ENCODE measurements at regions of chr15 and their contacts with region 1.

Region 1: GRCh38 chr15:41465822-41466421 is 27.8 kb upstream of the ITPKA start:
- DNase-seq: peak; percentile 59
- H3K4me3 Mint-ChIP-seq: no peak overlapping the region
- H3K27ac Mint-ChIP-seq: no peak overlapping the region
- H3K4me1 Mint-ChIP-seq: peaks cover 5% of the 10 kb centered on the region
- H3K27me3 Mint-ChIP-seq: no peaks in the 10 kb centered on the region
- CTCF ChIP-seq: peak; percentile 93

Region 2: GRCh38 chr15:41476416-41477048 is 10.6 kb after region 1 on chr15:
- CTCF ChIA-PET with region 1: interaction called, 21 read pairs
- POLR2A ChIA-PET with region 1: interaction called, 6 read pairs
- intact Hi-C with region 1: no loop called
- DNase-seq: peak; percentile 89
- H3K4me3 Mint-ChIP-seq: peak overlapping the region; percentile 17
- H3K27ac Mint-ChIP-seq: peak overlapping the region; percentile 92
- H3K4me1 Mint-ChIP-seq: peaks cover 18% of the 10 kb centered on the region
- H3K27me3 Mint-ChIP-seq: no peaks in the 10 kb centered on the region
- CTCF ChIP-seq: no peak

Region 3: GRCh38 chr15:41494190-41494921 is 28.4 kb after region 1 on chr15:
- CTCF ChIA-PET with region 1: no interaction called
- POLR2A ChIA-PET with region 1: no interaction called
- intact Hi-C with region 1: no loop called
- DNase-seq: no peak
- H3K4me3 Mint-ChIP-seq: peak overlapping the region; percentile 72
- H3K27ac Mint-ChIP-seq: no peak overlapping the region
- H3K4me1 Mint-ChIP-seq: peaks cover 14% of the 10 kb centered on the region
- H3K27me3 Mint-ChIP-seq: no peaks in the 10 kb centered on the region
- CTCF ChIP-seq: no peak

Region 4: DNA sequence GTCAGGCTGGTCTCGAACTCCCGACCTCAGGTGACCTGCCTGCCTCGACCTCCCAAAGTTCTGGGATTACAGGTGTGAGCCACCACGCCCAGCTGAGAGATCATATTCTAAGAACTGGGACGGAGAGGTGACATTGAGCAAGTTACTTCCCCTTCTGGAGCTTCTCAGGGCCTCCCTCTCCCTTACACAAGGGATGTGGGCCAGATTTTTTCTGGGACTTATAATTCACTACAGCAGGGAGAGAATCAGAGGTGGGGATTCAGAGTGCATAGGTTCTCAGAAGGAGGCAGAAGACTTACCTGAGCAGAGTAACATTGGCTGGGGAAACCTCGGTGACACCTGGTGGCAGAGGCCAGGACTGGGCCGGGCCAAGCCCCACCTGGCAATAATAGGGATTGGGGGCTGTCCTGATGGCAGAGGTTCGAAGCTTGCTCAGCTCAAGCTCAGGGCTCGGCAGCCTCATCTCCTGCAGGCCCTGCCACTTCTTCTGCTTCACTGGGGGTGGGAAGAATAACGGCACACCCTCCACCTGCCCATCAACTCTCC is 40.9 kb after region 1 on chr15:
- CTCF ChIA-PET with region 1: interaction called, 17 read pairs
- POLR2A ChIA-PET with region 1: interaction called, 10 read pairs
- intact Hi-C with region 1: no loop called
- DNase-seq: peak; percentile 31
- H3K4me3 Mint-ChIP-seq: no peak overlapping the region
- H3K27ac Mint-ChIP-seq: no peak overlapping the region
- H3K4me1 Mint-ChIP-seq: peaks cover 7% of the 10 kb centered on the region
- H3K27me3 Mint-ChIP-seq: no peaks in the 10 kb centered on the region
- CTCF ChIP-seq: peak; percentile 12

Region 5: DNA sequence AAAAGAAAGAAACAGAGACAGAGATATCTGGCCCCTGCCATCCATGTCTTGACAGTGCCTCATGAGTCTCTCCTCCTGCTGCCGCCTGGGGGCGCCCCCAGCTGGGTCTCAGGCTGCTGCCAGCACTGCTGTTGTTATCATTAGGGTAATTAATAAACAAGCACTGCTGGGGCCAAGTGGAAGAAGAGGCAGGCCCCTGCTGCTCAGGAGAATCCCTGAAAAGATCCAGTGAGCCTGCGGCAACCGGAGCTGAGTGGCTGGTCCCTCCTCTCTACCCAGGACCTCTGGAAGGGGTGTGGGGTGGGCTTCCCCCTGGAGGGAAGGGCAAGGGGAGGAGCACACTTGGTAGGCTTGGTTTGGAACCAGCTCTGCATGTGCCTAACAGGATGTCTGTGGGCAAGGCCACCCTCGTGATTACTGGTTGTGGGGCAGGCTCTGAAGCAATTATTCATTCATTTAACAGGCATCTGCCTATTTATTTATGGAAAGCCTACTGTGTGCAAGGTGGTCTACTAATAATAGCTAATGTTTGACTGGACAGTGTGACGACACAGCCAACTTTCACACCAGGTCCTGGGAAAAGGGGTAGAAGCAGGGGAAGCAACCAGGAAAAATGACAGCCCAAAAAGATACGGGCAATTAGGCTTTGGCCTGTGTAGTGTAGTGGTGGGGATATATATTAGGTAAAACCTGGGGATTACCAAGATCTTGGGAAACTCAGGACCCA is 91.9 kb after region 1 on chr15:
- CTCF ChIA-PET with region 1: no interaction called
- POLR2A ChIA-PET with region 1: no interaction called
- intact Hi-C with region 1: loop called (anchors 5 kb)
- DNase-seq: peak; percentile 55
- H3K4me3 Mint-ChIP-seq: peak overlapping the region; percentile 75
- H3K27ac Mint-ChIP-seq: no peak overlapping the region
- H3K4me1 Mint-ChIP-seq: no peaks in the 10 kb centered on the region
- H3K27me3 Mint-ChIP-seq: no peaks in the 10 kb centered on the region
- CTCF ChIP-seq: peak; percentile 69

Region 6: DNA sequence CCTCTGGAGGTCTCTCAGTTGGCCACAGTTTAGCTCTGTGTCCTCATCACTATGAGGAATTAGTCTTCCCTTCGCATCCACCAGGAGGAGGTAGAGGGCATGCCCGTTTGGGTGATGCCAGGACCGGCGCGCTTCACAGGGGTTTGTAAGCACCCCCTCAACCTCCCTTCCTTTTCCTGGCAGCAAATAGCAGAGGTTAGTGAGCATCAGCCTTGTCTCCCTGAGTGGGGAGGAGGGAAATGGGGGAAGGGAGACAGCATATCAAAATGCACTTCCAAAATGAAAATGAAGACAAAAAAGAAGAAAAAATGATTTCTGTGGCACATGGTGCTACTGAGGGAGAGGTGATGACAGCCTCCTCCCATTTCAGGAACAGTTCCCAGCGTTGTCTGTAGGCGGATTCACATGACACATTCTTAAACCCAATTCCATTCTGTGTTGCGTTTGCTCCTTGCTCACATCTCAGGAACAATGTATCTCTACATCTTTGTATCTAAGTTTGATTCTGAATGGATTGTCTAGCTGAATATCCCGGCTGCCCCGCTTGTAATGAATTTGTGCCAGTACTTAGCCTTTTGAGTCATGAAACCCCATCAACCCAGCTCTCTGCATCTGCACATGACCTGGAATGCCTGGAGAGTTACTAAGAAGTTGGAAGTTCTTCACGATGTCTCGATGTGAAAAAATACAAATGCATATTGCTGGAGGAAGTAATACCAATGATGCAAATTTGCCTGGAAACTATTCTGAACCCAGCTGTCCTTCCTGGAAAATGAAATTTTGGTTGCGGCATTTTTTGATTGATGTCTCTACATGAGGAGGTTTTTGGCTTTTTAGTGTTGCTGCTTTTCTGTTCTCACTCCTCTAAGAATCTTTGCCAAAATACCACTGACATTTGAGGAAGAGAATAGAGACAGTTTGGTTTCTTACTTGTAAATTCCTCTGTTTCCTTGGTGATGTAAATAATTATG is 138.3 kb after region 1 on chr15:
- CTCF ChIA-PET with region 1: interaction called, 4 read pairs
- POLR2A ChIA-PET with region 1: no interaction called
- intact Hi-C with region 1: loop called (anchors 5 kb)
- DNase-seq: peak; percentile 81
- H3K4me3 Mint-ChIP-seq: peak overlapping the region; percentile 69
- H3K27ac Mint-ChIP-seq: peak overlapping the region; percentile 13
- H3K4me1 Mint-ChIP-seq: peaks cover 16% of the 10 kb centered on the region
- H3K27me3 Mint-ChIP-seq: no peaks in the 10 kb centered on the region
- CTCF ChIP-seq: peak; percentile 55

Region 7: GRCh38 chr15:41671656-41672648 is 206.0 kb after region 1 on chr15:
- CTCF ChIA-PET with region 1: no interaction called
- POLR2A ChIA-PET with region 1: no interaction called
- intact Hi-C with region 1: no loop called
- DNase-seq: no peak
- H3K4me3 Mint-ChIP-seq: no peak overlapping the region
- H3K27ac Mint-ChIP-seq: no peak overlapping the region
- H3K4me1 Mint-ChIP-seq: no peaks in the 10 kb centered on the region
- H3K27me3 Mint-ChIP-seq: no peaks in the 10 kb centered on the region
- CTCF ChIP-seq: no peak

Region 8: DNA sequence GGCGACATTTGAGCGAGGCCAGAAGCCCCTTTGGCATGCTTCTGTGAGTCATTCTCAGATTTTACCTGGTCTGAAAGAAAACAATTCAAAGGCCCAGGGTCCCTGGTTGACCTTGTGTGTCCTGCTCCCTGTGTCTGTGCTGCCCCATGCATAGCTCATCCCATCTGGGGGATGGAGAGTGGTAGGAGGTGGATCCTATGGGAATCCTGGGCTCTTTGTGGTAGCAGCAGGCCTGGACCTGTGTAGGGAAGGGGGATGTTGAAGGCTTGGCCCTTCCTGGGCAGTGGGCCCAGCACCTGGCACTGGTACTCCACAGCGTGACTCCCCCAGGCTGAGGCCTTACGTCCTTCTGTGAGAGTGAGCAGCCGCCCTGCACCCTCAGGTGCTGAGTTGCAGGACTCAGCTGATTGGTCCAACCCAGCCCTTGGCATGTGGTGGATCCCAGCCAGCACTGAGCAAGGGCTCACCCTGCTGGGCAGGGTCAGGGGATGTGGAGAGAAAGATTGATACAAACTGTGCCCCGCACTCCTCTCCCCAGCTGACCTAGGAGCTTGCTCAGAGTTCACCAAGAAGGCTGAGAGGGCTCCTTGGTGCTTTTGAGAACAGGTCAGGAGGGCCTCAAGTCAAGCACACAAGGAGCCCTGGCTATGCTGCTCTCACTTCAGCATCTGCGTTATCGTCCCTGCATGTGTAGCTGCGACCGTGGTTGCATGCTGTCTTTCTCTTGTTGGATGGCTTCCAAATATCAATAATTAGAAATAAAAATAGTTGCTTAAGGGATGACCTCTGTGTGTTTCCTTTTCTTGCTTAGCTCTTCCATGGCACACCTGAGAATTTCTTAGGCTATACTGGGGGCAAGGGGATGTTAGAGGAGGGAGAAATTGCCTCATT is 340.6 kb after region 1 on chr15:
- CTCF ChIA-PET with region 1: no interaction called
- POLR2A ChIA-PET with region 1: no interaction called
- intact Hi-C with region 1: loop called (anchors 2 kb)
- DNase-seq: peak; percentile 94
- H3K4me3 Mint-ChIP-seq: no peak overlapping the region
- H3K27ac Mint-ChIP-seq: peak overlapping the region; percentile 99
- H3K4me1 Mint-ChIP-seq: peaks cover 30% of the 10 kb centered on the region
- H3K27me3 Mint-ChIP-seq: no peaks in the 10 kb centered on the region
- CTCF ChIP-seq: peak; percentile 20

Measured in MCF 10A (cell line).